MCF 10A (cell line): ENCODE measurements at regions of chr1 and their contacts with region 1.

Region 1: DNA sequence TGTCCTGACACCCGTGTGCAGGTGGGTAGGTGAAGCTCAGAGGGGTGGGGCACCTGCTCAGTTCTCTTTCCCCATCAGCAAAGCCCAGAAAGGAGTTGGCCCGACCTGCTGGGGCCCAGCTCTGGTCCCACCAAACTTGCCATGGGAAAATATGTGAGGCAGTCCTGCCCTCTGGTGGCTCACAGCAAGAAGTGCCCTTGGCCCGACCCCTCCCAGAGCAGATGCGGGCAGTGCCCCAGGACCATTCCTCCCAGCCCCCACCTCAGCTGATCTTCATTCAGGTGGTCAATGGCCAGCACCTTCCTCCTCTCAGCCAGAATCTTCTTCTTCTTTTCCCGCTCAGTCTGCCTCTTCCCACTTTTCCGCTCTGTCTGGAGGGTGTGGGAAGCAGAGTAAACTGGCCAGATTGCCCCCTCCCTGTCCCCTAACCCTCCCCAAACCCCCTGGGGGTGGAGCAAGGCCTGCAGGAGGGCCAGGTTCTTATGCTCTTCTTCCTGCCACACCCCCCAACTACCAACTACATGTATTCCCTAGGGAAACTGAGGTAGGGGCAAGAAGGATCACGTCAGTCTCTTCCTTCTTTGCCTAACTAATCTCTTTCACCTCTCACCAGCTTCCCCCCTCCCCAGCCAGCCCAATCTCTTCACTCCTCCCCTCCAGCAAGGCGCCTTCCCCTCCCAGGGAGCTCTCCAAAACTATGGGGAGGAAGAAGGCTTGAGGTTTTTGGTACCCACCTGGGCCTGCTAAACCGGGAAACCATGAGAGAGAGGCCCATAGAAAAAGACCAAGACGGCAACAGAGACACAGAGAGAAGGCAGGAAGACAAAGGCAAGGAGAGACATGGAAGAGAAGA is 15.6 kb downstream of the TNNT2 start:
- DNase-seq: peak; percentile 82
- H3K4me3 Mint-ChIP-seq: no peak overlapping the region
- H3K27ac Mint-ChIP-seq: no peak overlapping the region
- H3K4me1 Mint-ChIP-seq: peaks cover 24% of the 10 kb centered on the region
- H3K27me3 Mint-ChIP-seq: peaks cover 8% of the 10 kb centered on the region
- CTCF ChIP-seq: peak; percentile 100

Region 2: DNA sequence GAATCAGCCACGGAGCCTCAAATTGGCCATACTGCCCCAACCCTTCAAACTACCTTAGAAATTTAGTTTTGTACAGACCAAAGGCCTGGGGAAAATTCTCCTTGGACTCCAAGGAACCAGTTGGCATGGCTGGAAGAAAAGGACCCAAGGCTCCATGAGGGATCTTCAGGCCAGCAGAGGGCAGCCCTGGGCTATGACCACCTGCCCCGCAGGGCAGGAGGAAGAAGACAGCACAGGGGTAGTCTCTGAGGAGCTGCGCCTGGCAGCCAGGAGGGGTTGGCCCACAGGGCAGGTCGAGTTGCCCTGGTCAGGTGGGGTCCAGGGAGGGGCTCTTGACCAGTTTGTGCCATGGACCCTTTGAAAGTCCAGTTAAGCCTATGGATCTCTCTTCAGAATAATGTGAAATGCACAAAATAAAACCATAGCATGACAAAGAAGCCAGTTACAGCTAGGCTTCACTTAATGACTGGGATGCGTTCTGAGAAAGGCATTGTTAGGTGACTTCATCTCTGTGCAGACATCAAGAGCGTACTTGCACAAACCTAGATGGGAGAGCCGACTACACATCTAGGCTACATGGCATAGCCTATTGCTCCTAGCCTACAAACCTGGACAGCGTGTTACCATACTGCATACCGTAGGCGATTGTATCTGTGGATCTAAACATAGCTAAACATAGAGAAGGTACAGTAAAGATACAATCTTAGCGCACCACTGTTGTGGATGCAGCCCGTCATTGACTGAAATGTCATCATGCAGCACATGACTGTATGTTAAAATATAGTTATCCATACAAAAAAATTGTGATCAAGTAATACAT is 275.8 kb before region 1 on chr1:
- CTCF ChIA-PET with region 1: interaction called, 13 read pairs
- POLR2A ChIA-PET with region 1: no interaction called
- intact Hi-C with region 1: loop called (anchors 1 kb)
- DNase-seq: peak; percentile 82
- H3K4me3 Mint-ChIP-seq: no peak overlapping the region
- H3K27ac Mint-ChIP-seq: no peak overlapping the region
- H3K4me1 Mint-ChIP-seq: peaks cover 7% of the 10 kb centered on the region
- H3K27me3 Mint-ChIP-seq: peaks cover 31% of the 10 kb centered on the region
- CTCF ChIP-seq: peak; percentile 95

Region 3: GRCh38 chr1:201170533-201171062 is 191.3 kb before region 1 on chr1:
- CTCF ChIA-PET with region 1: interaction called, 12 read pairs
- POLR2A ChIA-PET with region 1: no interaction called
- intact Hi-C with region 1: no loop called
- DNase-seq: peak; percentile 99
- H3K4me3 Mint-ChIP-seq: peak overlapping the region; percentile 73
- H3K27ac Mint-ChIP-seq: peak overlapping the region; percentile 75
- H3K4me1 Mint-ChIP-seq: peaks cover 20% of the 10 kb centered on the region
- H3K27me3 Mint-ChIP-seq: no peaks in the 10 kb centered on the region
- CTCF ChIP-seq: no peak

Region 4: DNA sequence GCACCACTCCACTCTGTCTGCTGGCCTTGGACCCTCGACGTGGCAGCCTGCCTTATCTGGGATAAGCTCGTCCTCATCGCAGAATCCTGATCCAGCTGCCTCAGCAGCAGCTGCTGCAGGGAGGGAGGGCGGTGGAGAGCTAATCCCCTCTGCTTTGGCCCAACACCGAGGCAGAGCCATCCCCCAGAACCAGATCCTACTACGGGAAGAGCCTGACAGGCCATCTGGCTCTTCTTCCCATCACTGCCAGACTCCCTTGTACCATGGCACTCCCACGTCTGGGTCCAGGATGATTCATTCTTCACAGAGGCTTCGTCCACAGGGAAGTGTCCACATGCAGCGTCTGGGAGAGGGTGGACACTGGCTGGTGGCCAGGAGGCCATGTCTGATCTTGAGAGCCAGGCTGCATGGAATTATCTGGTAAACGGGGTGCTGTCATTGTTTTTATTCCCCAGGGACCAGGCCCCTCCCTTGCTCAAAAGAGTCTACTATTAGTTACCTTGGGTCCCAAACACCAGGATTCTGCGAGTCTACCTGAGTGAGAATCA is 93.2 kb before region 1 on chr1:
- CTCF ChIA-PET with region 1: interaction called, 139 read pairs
- POLR2A ChIA-PET with region 1: interaction called, 11 read pairs
- intact Hi-C with region 1: no loop called
- DNase-seq: peak; percentile 99
- H3K4me3 Mint-ChIP-seq: no peak overlapping the region
- H3K27ac Mint-ChIP-seq: peak overlapping the region; percentile 89
- H3K4me1 Mint-ChIP-seq: peaks cover 48% of the 10 kb centered on the region
- H3K27me3 Mint-ChIP-seq: no peaks in the 10 kb centered on the region
- CTCF ChIP-seq: no peak

Region 5: DNA sequence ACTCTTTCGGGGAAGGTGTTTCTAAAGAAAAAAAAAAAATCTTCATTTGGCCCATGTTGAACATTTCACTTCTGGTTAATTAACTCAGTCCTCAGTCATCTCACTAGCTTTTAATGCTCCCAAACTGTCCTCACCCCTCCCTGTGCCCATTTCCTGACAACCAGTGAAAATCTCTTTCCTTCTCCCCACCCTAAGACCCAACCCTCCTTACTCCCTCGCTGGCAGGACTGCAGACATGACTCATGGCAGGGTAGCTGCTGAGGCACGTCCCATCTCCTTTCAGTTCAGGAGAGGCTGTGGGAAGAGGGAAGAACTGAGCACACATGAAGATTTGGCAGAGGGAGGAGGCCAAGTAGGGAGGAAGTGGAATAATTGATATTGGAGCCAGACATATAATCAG is 66.0 kb before region 1 on chr1:
- CTCF ChIA-PET with region 1: interaction called, 395 read pairs
- POLR2A ChIA-PET with region 1: interaction called, 159 read pairs
- intact Hi-C with region 1: no loop called
- DNase-seq: peak; percentile 100
- H3K4me3 Mint-ChIP-seq: peak overlapping the region; percentile 42
- H3K27ac Mint-ChIP-seq: peak overlapping the region; percentile 75
- H3K4me1 Mint-ChIP-seq: peaks cover 50% of the 10 kb centered on the region
- H3K27me3 Mint-ChIP-seq: no peaks in the 10 kb centered on the region
- CTCF ChIP-seq: no peak

Region 6: GRCh38 chr1:201341377-201341776 is 20.5 kb before region 1 on chr1:
- CTCF ChIA-PET with region 1: interaction called, 314 read pairs
- POLR2A ChIA-PET with region 1: interaction called, 6 read pairs
- intact Hi-C with region 1: loop called (anchors 1 kb)
- DNase-seq: no peak
- H3K4me3 Mint-ChIP-seq: no peak overlapping the region
- H3K27ac Mint-ChIP-seq: no peak overlapping the region
- H3K4me1 Mint-ChIP-seq: peaks cover 8% of the 10 kb centered on the region
- H3K27me3 Mint-ChIP-seq: no peaks in the 10 kb centered on the region
- CTCF ChIP-seq: no peak

Region 7: DNA sequence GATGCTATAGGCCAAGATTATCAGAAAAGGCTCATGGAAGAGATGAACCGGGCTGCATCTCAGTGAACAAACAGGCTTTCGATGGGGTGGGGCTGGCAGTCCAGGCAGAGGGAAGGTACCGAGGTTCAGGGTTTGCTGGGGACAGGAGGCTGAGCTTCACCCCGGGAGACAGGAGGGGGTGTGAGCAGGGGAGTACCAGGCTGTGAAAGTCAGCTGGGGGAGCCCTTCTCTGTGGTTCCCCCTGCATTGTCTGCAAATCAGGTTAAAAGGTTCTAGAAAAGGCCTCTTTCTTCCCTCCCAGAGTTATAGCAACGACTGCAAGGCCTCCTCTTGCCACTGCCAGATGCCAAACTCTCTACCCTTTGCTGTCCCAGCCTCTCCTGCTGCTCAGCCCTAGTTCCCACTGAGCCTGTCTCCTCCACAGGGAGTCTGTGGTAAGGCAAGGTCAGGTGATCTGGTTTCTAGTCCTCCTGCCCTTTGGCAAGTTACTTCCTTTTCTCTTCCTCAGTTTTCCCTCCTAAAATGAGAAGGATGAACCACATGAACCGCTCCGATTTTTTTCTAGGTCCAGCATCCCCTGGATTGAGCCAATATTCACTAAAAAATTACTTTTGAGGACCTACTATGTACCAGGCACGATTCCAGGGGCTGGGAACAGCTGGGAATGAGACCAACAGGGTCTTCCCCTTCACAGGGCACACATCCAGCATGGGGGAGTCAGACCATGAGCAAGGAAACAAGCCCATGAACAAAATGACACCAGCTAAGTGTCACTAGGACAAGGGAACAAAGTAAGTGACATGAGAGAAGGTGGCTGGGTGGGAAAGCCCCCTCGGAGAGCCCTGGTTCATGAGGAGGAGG is 30.0 kb after region 1 on chr1:
- CTCF ChIA-PET with region 1: interaction called, 90 read pairs
- POLR2A ChIA-PET with region 1: interaction called, 3 read pairs
- intact Hi-C with region 1: no loop called
- DNase-seq: no peak
- H3K4me3 Mint-ChIP-seq: no peak overlapping the region
- H3K27ac Mint-ChIP-seq: no peak overlapping the region
- H3K4me1 Mint-ChIP-seq: peaks cover 9% of the 10 kb centered on the region
- H3K27me3 Mint-ChIP-seq: no peaks in the 10 kb centered on the region
- CTCF ChIP-seq: no peak